ENCODE measurements at regions of chr11 and their contacts with region 1.

Region 1: GRCh38 chr11:6353367-6353987 is 33.2 kb upstream of the CAVIN3 start:
- DNase-seq: peak; percentile 82
- ATAC-seq: peak; percentile 99
- H3K4me3 Mint-ChIP-seq: no peak overlapping the region
- H3K27ac Mint-ChIP-seq: no peak overlapping the region
- H3K4me1 Mint-ChIP-seq: peaks cover 5% of the 10 kb centered on the region
- H3K27me3 Mint-ChIP-seq: no peaks in the 10 kb centered on the region
- CTCF ChIP-seq: peak; percentile 97

Region 2: DNA sequence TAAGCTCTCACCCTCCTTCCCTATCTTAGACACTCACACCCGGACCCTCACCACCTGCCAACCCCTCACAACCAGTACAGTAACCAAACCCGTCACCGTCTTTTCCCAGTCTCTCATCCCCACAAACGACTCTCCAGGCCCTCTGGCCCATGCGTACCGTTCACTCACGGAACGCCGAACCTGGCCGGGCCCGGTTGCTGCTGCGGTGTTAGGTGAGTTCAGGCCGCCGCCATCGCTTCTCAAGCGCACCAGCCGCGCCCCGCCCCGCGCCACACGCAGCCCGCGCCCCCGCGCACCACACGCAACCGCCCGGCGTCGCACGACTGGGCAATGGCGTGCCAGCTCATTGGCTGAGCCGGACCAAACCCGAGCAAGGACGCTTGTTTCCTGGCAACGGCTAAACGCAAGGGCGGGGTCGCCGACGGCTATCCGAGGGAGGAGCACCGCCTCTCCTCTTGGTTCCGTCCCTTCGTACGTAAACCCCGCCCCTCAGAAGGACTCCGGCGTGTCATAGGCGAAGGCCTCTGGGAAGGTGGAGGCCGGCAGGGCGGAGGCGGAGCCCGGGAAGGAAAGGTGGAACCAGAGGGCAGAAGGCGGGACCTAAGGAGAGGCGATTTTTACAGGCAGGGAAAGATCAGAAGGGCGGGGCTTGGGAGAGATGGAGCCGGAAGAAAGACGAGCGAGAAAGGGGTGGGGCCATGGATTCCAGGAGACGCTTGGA is 118.9 kb before region 1 on chr11 and contains the start of gene FHIP1B:
- CTCF ChIA-PET with region 1: interaction called, 18 read pairs
- POLR2A ChIA-PET with region 1: no interaction called
- DNase-seq: peak; percentile 100
- ATAC-seq: peak; percentile 97
- H3K4me3 Mint-ChIP-seq: peak within 1 kb of the TSS; percentile 100
- H3K27ac Mint-ChIP-seq: peak within 1 kb of the TSS; percentile 96
- H3K4me1 Mint-ChIP-seq: peaks cover 13% of the 10 kb centered on the region
- H3K27me3 Mint-ChIP-seq: no peaks in the 10 kb centered on the region
- CTCF ChIP-seq: no peak
- total RNA-seq, gene FHIP1B: 22.2 to 24.8 TPM (median 23.6 TPM) in 3 replicates

Region 3: GRCh38 chr11:6269994-6270393 is 83.5 kb before region 1 on chr11:
- CTCF ChIA-PET with region 1: interaction called, 12 read pairs
- POLR2A ChIA-PET with region 1: no interaction called
- DNase-seq: peak; percentile 59
- ATAC-seq: peak; percentile 38
- H3K4me3 Mint-ChIP-seq: no peak overlapping the region
- H3K27ac Mint-ChIP-seq: no peak overlapping the region
- H3K4me1 Mint-ChIP-seq: peaks cover 7% of the 10 kb centered on the region; the same call in 1 of the 2 replicates
- H3K27me3 Mint-ChIP-seq: peaks cover 30% of the 10 kb centered on the region
- CTCF ChIP-seq: peak; percentile 60; the same call in 1 of the 2 replicates

Region 4: DNA sequence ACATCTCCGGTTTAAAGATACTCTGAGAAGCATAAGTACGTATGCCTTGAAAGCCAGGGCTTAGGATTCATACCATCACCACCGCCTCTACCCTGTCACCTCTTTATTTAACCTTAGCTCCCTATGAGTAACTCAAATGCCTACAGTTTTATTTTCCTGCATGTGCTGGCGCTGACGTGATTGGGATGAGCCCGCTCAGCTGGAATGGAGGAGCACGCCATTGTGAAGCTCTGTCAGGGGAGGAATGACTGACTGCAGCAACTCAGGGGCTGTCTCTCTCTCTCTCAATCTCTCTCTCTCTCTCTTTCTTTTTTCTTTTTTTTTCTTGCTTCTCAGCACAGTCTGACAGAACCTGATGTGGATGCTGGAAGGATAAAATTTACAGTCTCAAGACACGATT is 45.6 kb before region 1 on chr11:
- CTCF ChIA-PET with region 1: interaction called, 90 read pairs
- POLR2A ChIA-PET with region 1: no interaction called
- DNase-seq: no peak
- ATAC-seq: peak; percentile 22
- H3K4me3 Mint-ChIP-seq: no peak overlapping the region
- H3K27ac Mint-ChIP-seq: no peak overlapping the region
- H3K4me1 Mint-ChIP-seq: peaks cover 33% of the 10 kb centered on the region
- H3K27me3 Mint-ChIP-seq: no peaks in the 10 kb centered on the region
- CTCF ChIP-seq: no peak

Region 5: DNA sequence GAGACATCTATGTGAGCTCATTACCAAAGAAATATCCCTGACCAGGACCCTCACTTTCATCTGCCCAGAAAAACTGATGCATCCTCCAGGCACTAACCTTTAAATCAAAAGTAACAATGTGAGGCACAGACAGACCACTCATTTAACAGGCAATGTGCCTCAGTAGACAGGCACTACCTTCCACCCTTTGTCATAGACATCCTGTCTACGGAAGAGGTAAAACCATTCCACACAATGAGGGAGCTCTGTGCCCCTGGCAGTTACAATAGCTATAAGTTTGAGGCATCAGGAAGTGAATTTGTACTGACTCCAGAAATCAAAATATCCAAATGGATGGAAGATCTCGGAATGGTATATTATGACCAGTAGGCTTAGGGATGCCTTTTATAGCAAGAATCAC is 26.5 kb before region 1 on chr11:
- CTCF ChIA-PET with region 1: interaction called, 16 read pairs
- POLR2A ChIA-PET with region 1: interaction called, 7 read pairs
- DNase-seq: no peak
- ATAC-seq: no peak
- H3K4me3 Mint-ChIP-seq: no peak overlapping the region
- H3K27ac Mint-ChIP-seq: no peak overlapping the region
- H3K4me1 Mint-ChIP-seq: peaks cover 65% of the 10 kb centered on the region
- H3K27me3 Mint-ChIP-seq: no peaks in the 10 kb centered on the region
- CTCF ChIP-seq: no peak

Region 6: GRCh38 chr11:6516865-6517264 is 163.4 kb after region 1 on chr11:
- CTCF ChIA-PET with region 1: no interaction called
- POLR2A ChIA-PET with region 1: no interaction called
- DNase-seq: no peak
- ATAC-seq: no peak
- H3K4me3 Mint-ChIP-seq: no peak overlapping the region
- H3K27ac Mint-ChIP-seq: no peak overlapping the region
- H3K4me1 Mint-ChIP-seq: no peaks in the 10 kb centered on the region
- H3K27me3 Mint-ChIP-seq: no peaks in the 10 kb centered on the region; the same call in 1 of the 2 replicates
- CTCF ChIP-seq: no peak